ENCODE measurements at regions of chr9 and their contacts with region 1.

Region 1: GRCh38 chr9:35116898-35117551 is 1.4 kb upstream of the ATOSB start:
- DNase-seq: peak; percentile 80 to 98 (median 91)

Region 2: GRCh38 chr9:35056571-35057270 is 60.3 kb before region 1 on chr9:
- intact Hi-C with region 1: no loop called
- DNase-seq: peak in 1 of 10 donors; percentile 58

Region 3: DNA sequence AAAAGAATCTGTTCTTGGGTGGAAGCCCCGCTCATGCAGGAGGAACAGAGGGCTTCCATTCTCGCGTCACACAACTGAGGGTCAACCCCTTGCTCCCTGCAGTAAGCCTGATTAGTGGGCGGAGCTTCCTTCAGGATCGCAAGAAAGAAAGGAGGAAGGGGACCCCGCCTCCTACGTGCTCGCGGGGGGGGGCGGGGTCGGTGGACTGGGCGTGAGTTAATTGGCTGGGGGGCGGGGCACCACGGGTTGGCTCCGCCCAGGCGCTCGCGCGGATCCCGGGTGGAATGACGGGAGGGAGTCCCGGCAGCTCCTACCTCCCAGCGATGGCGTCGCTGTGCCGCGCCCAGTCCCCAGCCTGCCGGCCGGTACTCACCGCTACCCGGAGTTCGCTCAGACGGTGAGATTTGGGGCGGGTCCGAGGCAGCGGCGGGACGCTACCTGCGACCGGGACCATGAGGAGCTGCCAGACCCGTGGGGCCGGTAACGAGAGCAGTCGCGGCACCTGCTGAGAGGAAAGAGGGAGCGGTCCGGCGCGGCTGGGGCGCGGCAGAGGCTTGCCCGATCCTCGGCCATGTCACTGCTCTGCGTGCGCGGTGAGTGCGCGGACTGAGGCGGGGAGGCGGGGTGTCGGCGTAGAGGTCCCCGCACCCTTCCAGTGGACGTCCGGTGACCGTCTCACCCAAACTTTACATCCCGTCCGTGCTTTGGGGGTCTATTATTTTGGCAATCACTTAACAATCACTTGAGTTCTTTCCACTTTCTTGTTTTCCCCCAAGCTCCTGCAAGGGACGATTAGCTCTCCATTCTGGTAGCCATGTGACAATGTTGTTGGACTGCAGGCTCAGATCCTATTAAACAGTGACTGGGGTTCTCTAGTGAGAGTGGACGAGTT is 44.9 kb after region 1 on chr9 and contains the start of gene UNC13B:
- intact Hi-C with region 1: loop called (anchors 5 kb)
- DNase-seq: peak; percentile 90 to 99 (median 94)

Region 4: GRCh38 chr9:35258676-35259474 is 141.8 kb after region 1 on chr9:
- intact Hi-C with region 1: loop called (anchors 1 kb)
- DNase-seq: peak; percentile 38 to 95 (median 76)

Region 5: DNA sequence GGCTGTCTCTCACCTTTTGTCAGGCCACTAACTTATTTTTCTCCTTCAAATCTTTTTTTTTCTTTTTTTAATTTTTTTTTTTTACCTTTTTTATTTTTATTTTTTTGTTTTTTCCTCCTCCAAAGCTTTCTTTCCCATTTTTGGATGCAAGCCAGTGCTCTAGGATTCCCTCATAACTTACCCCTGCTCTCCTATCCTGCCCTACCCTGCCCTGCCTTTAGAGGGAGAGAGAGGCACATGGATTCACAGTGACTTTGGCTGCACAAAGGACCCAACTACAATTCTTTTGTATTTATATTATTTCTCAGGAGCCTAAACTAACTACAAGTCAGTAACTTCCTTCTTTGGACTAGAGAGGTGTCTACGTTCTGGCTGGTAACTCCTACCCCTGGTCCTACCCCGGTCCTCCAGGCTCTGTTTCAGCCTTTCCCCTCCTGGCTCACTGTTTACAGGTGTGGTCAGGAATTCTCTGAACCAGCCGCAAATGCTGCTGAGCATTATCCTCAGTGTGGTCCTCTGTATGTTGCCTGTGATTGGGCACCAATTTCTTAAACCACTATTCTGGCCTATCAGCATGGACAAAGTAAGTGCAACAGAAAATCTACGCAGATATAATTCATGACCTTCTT is 364.4 kb after region 1 on chr9:
- intact Hi-C with region 1: loop called (anchors 1 kb)
- DNase-seq: peak in 1 of 10 donors; percentile 13